ENCODE measurements at regions of chr2 and their contacts with region 1.

Region 1: GRCh38 chr2:62410015-62410453 is 96.0 kb downstream of the TMEM17 start:
- DNase-seq: no peak
- H3K4me3 Mint-ChIP-seq: no peak overlapping the region
- H3K27ac Mint-ChIP-seq: no peak overlapping the region
- H3K4me1 Mint-ChIP-seq: peaks cover 3% of the 10 kb centered on the region
- H3K27me3 Mint-ChIP-seq: no peaks in the 10 kb centered on the region

Region 2: GRCh38 chr2:61922714-61923113 is 487.3 kb before region 1 on chr2:
- intact Hi-C with region 1: loop called (anchors 1 kb)
- DNase-seq: no peak
- H3K4me3 Mint-ChIP-seq: no peak overlapping the region
- H3K27ac Mint-ChIP-seq: no peak overlapping the region
- H3K4me1 Mint-ChIP-seq: no peaks in the 10 kb centered on the region
- H3K27me3 Mint-ChIP-seq: no peaks in the 10 kb centered on the region

Region 3: GRCh38 chr2:61993444-61994024 is 416.5 kb before region 1 on chr2:
- intact Hi-C with region 1: loop called (anchors 1 kb)
- DNase-seq: no peak
- H3K4me3 Mint-ChIP-seq: no peak overlapping the region
- H3K27ac Mint-ChIP-seq: no peak overlapping the region
- H3K4me1 Mint-ChIP-seq: peaks cover 7% of the 10 kb centered on the region
- H3K27me3 Mint-ChIP-seq: no peaks in the 10 kb centered on the region

Region 4: DNA sequence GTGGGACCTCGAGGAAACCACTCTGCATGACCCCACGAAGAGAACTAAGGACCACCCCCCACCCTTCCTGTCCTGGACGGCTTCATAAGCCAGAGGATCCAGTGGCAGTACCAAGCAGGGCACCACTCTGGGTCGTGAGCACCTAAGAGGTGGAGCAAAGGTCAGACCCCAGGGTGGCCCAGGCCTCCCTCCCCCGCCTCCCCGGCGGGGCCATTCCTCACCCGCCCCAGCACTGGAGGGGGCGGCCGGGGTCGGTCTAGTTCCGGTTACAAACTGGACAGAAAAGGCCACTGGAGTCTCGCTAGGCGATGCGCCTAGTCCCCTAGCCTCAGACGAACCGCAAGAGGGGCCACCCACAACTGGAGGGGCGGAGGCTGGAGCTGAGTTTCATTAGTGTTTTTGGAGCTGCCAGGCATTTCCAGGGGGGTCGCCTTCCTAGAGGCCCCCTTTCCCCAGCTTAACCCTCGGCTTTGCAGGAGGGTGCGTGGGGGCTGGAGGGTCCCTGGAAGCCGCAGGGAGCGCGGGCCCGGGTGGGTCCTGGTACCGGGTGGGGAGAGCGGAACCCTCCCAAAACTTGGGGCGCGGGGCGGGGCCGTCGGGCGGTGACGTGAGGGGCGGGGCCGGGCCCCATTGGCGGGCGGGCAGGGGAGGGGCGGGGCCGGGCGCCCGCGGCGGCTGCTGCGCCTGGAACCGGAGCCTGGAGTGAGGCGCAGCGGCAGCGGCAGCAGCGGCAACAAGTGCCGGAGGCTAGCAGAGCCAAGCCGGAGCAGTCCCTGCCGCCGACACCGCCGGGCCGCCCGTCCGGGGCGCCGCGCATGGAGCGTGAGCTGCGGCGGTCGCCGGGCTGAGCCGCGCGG is 214.4 kb before region 1 on chr2 and contains the start of gene B3GNT2:
- intact Hi-C with region 1: loop called (anchors 5 kb)
- DNase-seq: peak; percentile 74
- H3K4me3 Mint-ChIP-seq: peak within 1 kb of the TSS; percentile 90
- H3K27ac Mint-ChIP-seq: peak within 1 kb of the TSS; percentile 91
- H3K4me1 Mint-ChIP-seq: peaks cover 32% of the 10 kb centered on the region
- H3K27me3 Mint-ChIP-seq: peaks cover 11% of the 10 kb centered on the region
- total RNA-seq, gene B3GNT2: 29.0 and 29.3 TPM in 2 replicates

Region 5: DNA sequence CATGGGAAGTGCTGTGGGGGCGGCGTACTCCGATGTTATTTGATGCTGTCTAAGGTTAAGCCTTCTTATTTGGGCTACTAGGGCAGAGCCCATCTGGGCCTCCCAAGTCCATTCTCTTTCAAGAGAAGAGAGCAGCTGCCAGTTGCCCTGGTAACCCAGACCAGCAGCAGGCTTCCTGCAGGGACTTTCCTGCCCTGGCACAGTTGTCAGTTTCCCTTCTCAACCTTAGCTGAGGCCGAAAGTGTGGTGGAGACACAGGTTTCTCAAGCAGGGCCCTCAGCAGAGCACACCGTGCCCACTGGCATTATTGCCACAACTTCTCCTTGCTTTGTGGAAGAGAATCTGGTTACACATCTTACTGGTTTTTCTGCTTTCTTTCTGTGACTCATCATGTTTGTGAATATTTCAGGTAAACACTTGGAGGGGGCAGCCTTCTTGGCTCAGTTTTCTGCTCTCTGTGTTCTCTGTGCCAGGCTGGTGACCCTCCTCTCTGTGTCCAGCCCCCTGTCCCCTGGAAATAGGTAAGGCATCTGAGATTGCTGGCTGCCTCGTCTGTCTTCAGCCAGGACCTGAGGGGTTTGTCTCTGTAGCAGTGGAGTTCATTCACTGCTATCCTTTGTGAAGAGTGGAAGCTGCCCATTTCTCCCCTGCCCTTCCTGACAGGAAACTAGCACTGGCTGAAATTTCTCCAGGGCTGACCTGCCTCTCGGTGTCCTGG is 103.1 kb before region 1 on chr2:
- intact Hi-C with region 1: loop called (anchors 1 kb)
- DNase-seq: peak; percentile 25
- H3K4me3 Mint-ChIP-seq: no peak overlapping the region
- H3K27ac Mint-ChIP-seq: peak overlapping the region; percentile 88
- H3K4me1 Mint-ChIP-seq: peaks cover 78% of the 10 kb centered on the region
- H3K27me3 Mint-ChIP-seq: peaks cover 2% of the 10 kb centered on the region

Region 6: DNA sequence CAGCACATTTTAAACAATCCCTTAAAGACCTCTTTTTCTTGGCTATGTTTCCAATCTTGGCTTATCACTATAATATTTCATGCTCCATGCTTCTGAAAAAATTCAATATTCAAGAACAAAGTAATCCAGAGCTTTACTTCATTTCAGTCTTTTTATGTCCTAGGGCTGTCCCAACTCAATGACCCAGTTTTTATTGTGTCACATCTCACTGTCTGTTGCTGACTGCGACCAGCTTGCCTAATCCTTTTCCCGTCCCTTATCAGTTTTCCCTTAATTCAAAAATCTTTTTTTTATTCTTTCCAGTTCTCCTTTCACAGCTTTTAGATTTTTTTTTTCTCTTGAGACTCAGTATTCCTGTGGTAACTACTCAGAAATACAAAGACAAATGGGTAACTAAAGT is 85.7 kb after region 1 on chr2:
- intact Hi-C with region 1: no loop called
- DNase-seq: no peak
- H3K4me3 Mint-ChIP-seq: no peak overlapping the region
- H3K27ac Mint-ChIP-seq: no peak overlapping the region
- H3K4me1 Mint-ChIP-seq: no peaks in the 10 kb centered on the region
- H3K27me3 Mint-ChIP-seq: peaks cover 17% of the 10 kb centered on the region

Region 7: GRCh38 chr2:62526531-62527381 is 116.7 kb after region 1 on chr2:
- intact Hi-C with region 1: no loop called
- DNase-seq: no peak
- H3K4me3 Mint-ChIP-seq: no peak overlapping the region
- H3K27ac Mint-ChIP-seq: no peak overlapping the region
- H3K4me1 Mint-ChIP-seq: no peaks in the 10 kb centered on the region
- H3K27me3 Mint-ChIP-seq: peaks cover 1% of the 10 kb centered on the region

Measured in activated T-helper 2 cell treated with anti-CD3 and anti-CD28 coated beads, Interferon-gamma antibody, Interleukin-2, Interleukin-4, amounts not matched to agents 10 μg/mL and 5 μg/mL and 100 μg/mL, durations not matched to agents 14 hours and 24 hours and 36 hours (primary cell).